ENCODE measurements at regions of chr13 and their contacts with region 1.

Region 1: GRCh38 chr13:98445340-98446233 is 131.3 kb downstream of the STK24 start:
- DNase-seq: peak; percentile 89
- ATAC-seq: peak; percentile 97
- H3K4me3 Mint-ChIP-seq: no peak overlapping the region
- H3K27ac Mint-ChIP-seq: peak overlapping the region; percentile 92
- H3K4me1 Mint-ChIP-seq: peaks cover 16% of the 10 kb centered on the region
- H3K27me3 Mint-ChIP-seq: no peaks in the 10 kb centered on the region
- CTCF ChIP-seq: peak; percentile 94

Region 2: DNA sequence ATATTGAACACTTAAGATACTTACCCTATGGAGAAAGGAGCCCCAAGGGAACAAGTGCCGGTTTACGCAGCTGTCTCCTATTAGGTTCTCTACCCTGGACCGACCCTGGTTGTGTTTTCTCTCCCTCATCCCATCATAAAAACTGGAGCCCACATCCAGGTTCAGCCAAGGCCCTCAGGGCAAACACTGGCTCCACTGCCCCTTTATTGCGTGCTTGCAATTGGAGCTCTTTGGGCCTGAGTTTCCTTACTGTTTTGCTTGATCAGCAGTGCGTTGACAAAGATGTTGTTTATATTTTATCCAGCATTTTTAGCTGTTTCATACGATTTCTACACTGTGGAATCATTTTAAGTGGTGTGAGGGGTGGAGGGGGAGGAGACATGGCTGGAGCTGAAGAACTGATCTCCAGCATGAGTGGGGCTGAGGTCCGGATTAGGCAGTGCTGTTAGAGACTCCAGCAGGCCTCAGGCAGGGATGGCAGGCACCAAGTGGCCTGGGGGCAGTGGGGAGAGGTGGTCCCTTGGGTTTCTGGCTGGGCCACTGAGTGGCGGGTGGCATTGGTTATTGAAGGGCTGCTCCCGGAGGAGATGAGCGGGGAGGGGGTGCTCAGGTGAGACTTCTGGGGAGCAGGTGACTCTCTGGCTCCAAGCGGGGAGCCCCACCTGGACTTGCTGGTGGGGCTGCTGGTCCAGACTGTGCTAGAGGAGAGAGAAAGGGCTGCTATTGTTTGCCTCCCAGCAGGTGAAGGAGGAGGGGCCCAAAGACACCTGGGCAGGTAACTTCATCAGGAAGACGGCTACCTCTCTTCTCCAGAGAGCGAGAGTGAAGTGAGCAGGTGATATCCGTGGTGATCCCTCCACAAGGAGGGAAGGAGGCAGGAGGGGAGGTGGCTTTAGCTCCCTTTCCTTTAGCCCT is 206.2 kb before region 1 on chr13:
- CTCF ChIA-PET with region 1: no interaction called
- POLR2A ChIA-PET with region 1: no interaction called
- intact Hi-C with region 1: no loop called
- DNase-seq: no peak
- ATAC-seq: no peak
- H3K4me3 Mint-ChIP-seq: no peak overlapping the region
- H3K27ac Mint-ChIP-seq: no peak overlapping the region
- H3K4me1 Mint-ChIP-seq: no peaks in the 10 kb centered on the region
- H3K27me3 Mint-ChIP-seq: peaks cover 3% of the 10 kb centered on the region
- CTCF ChIP-seq: no peak

Region 3: DNA sequence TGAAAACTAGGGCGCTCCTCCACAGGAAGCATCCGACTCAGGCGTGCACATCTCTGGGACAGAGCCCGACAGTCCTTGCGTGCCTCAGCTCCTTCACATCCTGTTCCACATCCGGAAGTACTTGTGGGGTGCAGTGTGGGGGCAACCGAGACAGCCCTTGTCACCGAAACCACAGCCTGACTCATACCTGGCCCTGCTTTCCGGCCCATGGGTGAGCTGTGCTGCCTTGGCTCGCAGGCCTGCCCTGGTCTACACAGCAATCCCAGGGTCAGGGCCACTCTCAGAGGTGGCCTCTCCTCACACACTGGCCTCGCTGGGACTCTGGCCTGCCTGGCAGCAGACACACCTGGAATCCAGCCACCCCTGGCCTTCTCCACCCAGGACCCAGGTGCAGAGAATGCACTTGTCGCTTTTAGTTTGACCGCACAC is 31.0 kb after region 1 on chr13:
- CTCF ChIA-PET with region 1: interaction called, 14 read pairs
- POLR2A ChIA-PET with region 1: no interaction called
- intact Hi-C with region 1: no loop called
- DNase-seq: peak; percentile 96
- ATAC-seq: peak; percentile 85
- H3K4me3 Mint-ChIP-seq: peak overlapping the region; percentile 56
- H3K27ac Mint-ChIP-seq: peak overlapping the region; percentile 81
- H3K4me1 Mint-ChIP-seq: peaks cover 72% of the 10 kb centered on the region
- H3K27me3 Mint-ChIP-seq: no peaks in the 10 kb centered on the region
- CTCF ChIP-seq: no peak

Region 4: GRCh38 chr13:98509271-98510155 is 63.9 kb after region 1 on chr13:
- CTCF ChIA-PET with region 1: interaction called, 13 read pairs
- POLR2A ChIA-PET with region 1: no interaction called
- intact Hi-C with region 1: no loop called
- DNase-seq: peak; percentile 72
- ATAC-seq: peak; percentile 81
- H3K4me3 Mint-ChIP-seq: no peak overlapping the region
- H3K27ac Mint-ChIP-seq: peak overlapping the region; percentile 87
- H3K4me1 Mint-ChIP-seq: peaks cover 90% of the 10 kb centered on the region
- H3K27me3 Mint-ChIP-seq: no peaks in the 10 kb centered on the region
- CTCF ChIP-seq: no peak

Region 5: DNA sequence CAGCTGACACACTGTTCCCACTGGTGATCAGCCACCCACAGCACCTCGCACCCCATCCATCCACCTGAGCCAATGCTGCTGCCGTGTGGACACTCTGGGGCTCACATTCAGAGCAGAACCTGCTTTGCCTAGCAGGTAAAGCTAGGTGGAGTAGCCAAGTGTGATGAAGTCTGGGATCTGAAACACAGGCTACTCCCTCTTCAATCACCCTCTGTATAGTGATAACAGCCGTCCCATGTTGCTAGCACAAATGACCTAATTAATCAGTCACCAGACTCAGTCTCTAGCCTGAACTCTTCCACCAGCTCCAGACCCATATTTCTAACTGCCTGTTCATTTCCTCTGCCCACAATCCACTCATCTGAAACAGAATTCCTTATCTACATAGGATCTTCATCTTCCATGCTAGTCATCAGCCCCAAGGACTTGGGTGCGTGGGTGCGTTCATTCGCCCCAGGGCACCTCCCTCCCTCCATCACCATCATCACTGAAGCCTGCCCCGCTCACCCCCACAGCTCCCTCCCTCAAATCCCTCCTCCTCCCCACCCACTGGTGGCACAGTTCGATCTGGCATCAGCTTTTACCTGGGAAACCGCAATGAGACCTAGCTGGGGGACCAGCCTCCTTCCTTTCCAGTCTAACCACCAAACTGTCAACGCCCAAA is 111.5 kb after region 1 on chr13:
- CTCF ChIA-PET with region 1: interaction called, 10 read pairs
- POLR2A ChIA-PET with region 1: no interaction called
- intact Hi-C with region 1: no loop called
- DNase-seq: peak; percentile 22
- ATAC-seq: peak; percentile 50
- H3K4me3 Mint-ChIP-seq: no peak overlapping the region
- H3K27ac Mint-ChIP-seq: peak overlapping the region; percentile 17
- H3K4me1 Mint-ChIP-seq: peaks cover 67% of the 10 kb centered on the region
- H3K27me3 Mint-ChIP-seq: no peaks in the 10 kb centered on the region
- CTCF ChIP-seq: no peak

Region 6: GRCh38 chr13:98664039-98664438 is 218.5 kb after region 1 on chr13:
- CTCF ChIA-PET with region 1: interaction called, 13 read pairs
- POLR2A ChIA-PET with region 1: no interaction called
- intact Hi-C with region 1: no loop called
- DNase-seq: peak; percentile 74
- ATAC-seq: peak; percentile 97
- H3K4me3 Mint-ChIP-seq: no peak overlapping the region
- H3K27ac Mint-ChIP-seq: peak overlapping the region; percentile 51
- H3K4me1 Mint-ChIP-seq: peaks cover 20% of the 10 kb centered on the region
- H3K27me3 Mint-ChIP-seq: no peaks in the 10 kb centered on the region
- CTCF ChIP-seq: no peak

Region 7: DNA sequence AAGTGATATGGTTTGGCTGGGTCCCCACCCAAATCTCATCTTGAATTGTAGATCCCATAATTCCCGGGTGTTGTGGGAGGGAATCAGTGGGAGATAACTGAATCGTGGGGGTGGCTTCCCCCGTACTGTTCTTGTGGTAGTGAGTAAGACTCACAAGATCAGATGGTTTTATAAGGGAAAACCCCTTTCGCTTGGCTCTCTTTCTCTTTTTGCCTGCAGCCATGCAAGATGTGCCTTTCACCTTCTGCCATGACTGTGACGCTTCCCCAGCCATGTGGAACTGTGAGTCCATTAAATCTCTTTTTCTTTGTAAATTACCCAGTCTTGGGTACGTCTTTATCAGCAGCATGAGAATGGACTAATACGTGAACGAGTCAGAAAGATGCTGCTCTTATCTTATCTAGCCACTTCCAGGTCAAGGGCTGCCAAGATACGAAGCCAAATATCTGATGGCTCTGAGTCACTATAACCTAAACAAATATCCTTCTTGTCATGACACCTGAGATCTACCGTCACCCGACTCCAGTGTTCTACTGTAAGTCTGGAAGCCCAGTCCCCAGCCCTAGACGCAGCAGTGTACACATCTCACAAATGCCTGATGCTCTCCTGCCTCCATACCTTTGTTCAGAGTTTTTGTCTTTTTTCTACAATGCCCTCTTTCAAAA is 261.0 kb after region 1 on chr13:
- CTCF ChIA-PET with region 1: no interaction called
- POLR2A ChIA-PET with region 1: no interaction called
- intact Hi-C with region 1: no loop called
- DNase-seq: peak; percentile 3
- ATAC-seq: no peak
- H3K4me3 Mint-ChIP-seq: no peak overlapping the region
- H3K27ac Mint-ChIP-seq: no peak overlapping the region
- H3K4me1 Mint-ChIP-seq: peaks cover 2% of the 10 kb centered on the region
- H3K27me3 Mint-ChIP-seq: peaks cover 15% of the 10 kb centered on the region
- CTCF ChIP-seq: no peak

Measured in activated CD8-positive, alpha-beta T cell treated with anti-CD3 and anti-CD28 coated beads for 36 hours (primary cell).